Common myeloid progenitor, CD34-positive (primary cell): ENCODE measurements at regions of chr3 and their contacts with region 1.

Region 1: DNA sequence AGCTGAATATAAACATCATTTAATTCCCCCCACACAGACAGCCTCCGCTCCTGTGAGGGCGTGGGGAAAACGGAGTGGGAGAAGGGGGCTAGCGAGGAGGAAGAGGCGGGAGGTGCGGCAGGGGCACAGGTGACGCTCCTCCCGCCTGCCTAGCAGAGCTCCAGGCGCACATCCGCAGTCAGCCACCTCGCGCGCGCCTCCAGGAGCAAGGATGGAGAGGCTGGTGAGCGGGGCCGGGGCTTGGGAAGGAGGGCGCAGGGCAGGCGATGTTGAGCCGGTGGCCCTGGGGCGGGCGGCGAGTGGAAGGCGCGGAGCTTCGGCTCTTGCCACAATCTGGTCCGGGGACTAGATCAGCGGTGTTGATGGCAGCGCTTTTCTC is at the start of gene CD200:
- DNase-seq: peak; percentile 47 to 66 (median 51)
- H3K4me3 ChIP-seq: peak within 1 kb of the TSS; percentile 78 to 99 (median 90)
- H3K27ac ChIP-seq: peak within 1 kb of the TSS; percentile 74 to 82
- H3K4me1 ChIP-seq: peaks cover 11 to 38% (median 21%) of the 10 kb centered on the region in 4 experiments
- H3K27me3 ChIP-seq: no peaks in the 10 kb centered on the region

Region 2: GRCh38 chr3:112321867-112322649 is 10.9 kb before region 1 on chr3:
- CTCF ChIA-PET with region 1: interaction called, 13 read pairs
- POLR2A ChIA-PET with region 1: no interaction called
- DNase-seq: peak in 1 of 3 donors; percentile 34
- H3K4me3 ChIP-seq: no peak overlapping the region
- H3K27ac ChIP-seq: no peak overlapping the region
- H3K4me1 ChIP-seq: peaks cover 0 to 6% (median 5%) of the 10 kb centered on the region in 4 experiments
- H3K27me3 ChIP-seq: no peaks in the 10 kb centered on the region

Region 3: GRCh38 chr3:112464264-112464663 is 131.3 kb after region 1 on chr3:
- CTCF ChIA-PET with region 1: interaction called, 10 read pairs
- POLR2A ChIA-PET with region 1: no interaction called
- DNase-seq: peak; percentile 31 to 84 (median 71)
- H3K4me3 ChIP-seq: peak overlapping the region in 4 of 7 experiments; percentile 15 to 43 (median 37)
- H3K27ac ChIP-seq: no peak overlapping the region
- H3K4me1 ChIP-seq: peaks cover 21 to 60% (median 48%) of the 10 kb centered on the region in 4 experiments
- H3K27me3 ChIP-seq: no peaks in the 10 kb centered on the region

Region 4: DNA sequence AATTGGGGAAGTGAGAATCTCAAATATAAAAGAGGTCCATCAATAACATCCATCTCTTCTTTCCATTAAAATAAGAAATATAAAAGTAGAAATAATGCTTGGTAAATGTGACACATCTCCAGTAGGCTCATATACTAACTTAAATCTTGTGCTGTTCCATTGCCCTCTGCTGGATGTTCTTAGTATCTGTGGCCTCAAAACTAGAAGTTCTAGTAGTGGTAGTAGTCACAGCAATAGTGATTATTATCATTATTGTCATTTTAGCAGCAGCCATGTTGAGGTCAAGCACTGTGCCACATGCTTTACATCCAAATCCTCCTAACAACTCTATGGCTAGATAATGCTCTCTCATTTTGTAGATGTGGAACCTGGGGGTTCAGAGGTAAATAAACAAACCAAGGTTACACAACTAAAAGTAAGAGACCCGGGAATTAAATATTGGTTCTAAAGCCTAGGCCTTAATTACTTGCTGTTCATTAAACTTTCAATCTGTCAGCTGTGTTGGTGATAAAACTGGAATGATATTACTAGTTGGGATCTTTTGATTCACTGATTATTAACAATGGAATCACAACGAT is 186.5 kb after region 1 on chr3:
- CTCF ChIA-PET with region 1: interaction called, 20 read pairs
- POLR2A ChIA-PET with region 1: interaction called, 3 read pairs
- DNase-seq: peak; percentile 82 to 89 (median 87)
- H3K4me3 ChIP-seq: no peak overlapping the region
- H3K27ac ChIP-seq: no peak overlapping the region
- H3K4me1 ChIP-seq: peaks cover 4 to 15% (median 5%) of the 10 kb centered on the region in 4 experiments
- H3K27me3 ChIP-seq: no peaks in the 10 kb centered on the region